SK-N-SH (cell line): ENCODE measurements at regions of chr7 and their contacts with region 1.

Region 1: GRCh38 chr7:1587125-1587592 is 17.3 kb upstream of the PSMG3 start:
- DNase-seq: peak; percentile 97
- H3K4me3 ChIP-seq: no peak overlapping the region; a peak in 1 of 4 replicates
- H3K27ac ChIP-seq: peak overlapping the region in 1 of 2 experiments; percentile 95; a peak in 2 of 4 replicates
- H3K4me1 ChIP-seq: peaks cover 0 to 57% of the 10 kb centered on the region in 2 experiments; a peak in 1 of 4 replicates
- H3K27me3 ChIP-seq: peaks cover 18% of the 10 kb centered on the region; the same call in 1 of the 2 replicates
- CTCF ChIP-seq: no peak
- EP300 ChIP-seq: peak in 1 of 2 experiments; percentile 90; a peak in 2 of 4 replicates
- RAD21 ChIP-seq: peak; percentile 26

Region 2: GRCh38 chr7:1638215-1638661 is 51.1 kb after region 1 on chr7:
- CTCF ChIA-PET with region 1: interaction called, 27 read pairs
- POLR2A ChIA-PET with region 1: interaction called, 4 read pairs
- DNase-seq: no peak
- H3K4me3 ChIP-seq: no peak overlapping the region
- H3K27ac ChIP-seq: peak overlapping the region in 1 of 2 experiments; percentile 99; a peak in 2 of 4 replicates
- H3K4me1 ChIP-seq: peaks cover 0 to 52% of the 10 kb centered on the region in 2 experiments; a peak in 1 of 4 replicates
- H3K27me3 ChIP-seq: 0 out of 2 replicates have a peak, but pooled peaks cover 5% of the 10 kb centered on the region
- CTCF ChIP-seq: no peak
- EP300 ChIP-seq: no peak
- RAD21 ChIP-seq: no peak

Region 3: DNA sequence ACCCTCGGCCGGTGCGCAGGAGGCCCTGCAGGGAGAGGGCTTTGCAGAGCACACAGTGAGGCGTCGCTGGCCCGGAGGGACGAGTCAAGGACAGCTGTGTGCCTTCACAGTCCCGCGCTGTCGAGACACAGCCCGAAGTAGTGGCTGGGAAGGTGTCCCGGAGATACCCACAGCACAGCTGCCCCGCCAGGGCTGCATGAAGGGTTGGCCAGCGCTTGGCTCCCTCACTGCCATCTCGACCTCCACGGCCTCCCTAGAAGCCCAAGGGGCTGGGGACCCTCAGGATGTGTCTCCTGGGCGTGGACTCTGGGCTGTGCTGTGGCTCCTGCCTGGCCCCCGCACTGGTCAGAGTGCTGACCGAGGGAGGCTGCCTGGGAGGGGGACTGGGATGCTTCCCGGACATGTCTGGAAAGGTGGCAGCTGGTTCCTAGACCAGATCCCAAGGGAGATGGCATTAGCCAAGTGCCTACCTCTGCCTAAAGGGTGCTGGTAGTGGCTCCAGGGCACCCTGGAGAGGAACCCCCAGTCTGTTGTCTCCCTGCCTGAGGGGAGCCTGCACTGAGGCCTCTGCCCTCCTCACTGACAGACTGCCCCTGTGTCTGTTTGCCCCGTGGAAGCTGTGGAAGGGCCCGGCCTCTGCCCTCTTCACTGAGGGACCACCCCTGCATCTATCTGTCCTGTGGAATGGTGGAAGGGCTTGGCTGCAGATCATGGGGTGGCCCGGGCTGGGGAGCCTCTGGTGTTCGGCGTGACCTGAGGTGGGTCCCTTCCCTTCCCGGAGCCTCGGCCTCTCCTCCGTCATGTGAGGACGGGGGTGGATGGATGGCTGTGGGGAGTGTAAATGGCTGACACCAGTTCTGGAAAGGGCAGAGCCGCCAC is 88.8 kb after region 1 on chr7:
- CTCF ChIA-PET with region 1: no interaction called
- POLR2A ChIA-PET with region 1: no interaction called
- DNase-seq: peak; percentile 44
- H3K4me3 ChIP-seq: no peak overlapping the region; a peak in 1 of 4 replicates
- H3K27ac ChIP-seq: peak overlapping the region in 1 of 2 experiments; percentile 0; a peak in 1 of 4 replicates
- H3K4me1 ChIP-seq: peaks cover 0 to 84% of the 10 kb centered on the region in 2 experiments; a peak in 1 of 4 replicates
- H3K27me3 ChIP-seq: peaks cover 28% of the 10 kb centered on the region
- CTCF ChIP-seq: no peak
- EP300 ChIP-seq: no peak
- RAD21 ChIP-seq: no peak